SK-N-SH (cell line): ENCODE measurements at regions of chr10 and their contacts with region 1.

Region 1: GRCh38 chr10:102641880-102642735 is 2.2 kb upstream of the TRIM8 start:
- DNase-seq: peak; percentile 92
- H3K4me3 ChIP-seq: peak overlapping the region; percentile 56 to 99
- H3K27ac ChIP-seq: peak overlapping the region; percentile 93 to 94
- H3K4me1 ChIP-seq: peaks cover 4 to 13% of the 10 kb centered on the region in 2 experiments; a peak in 3 of 4 replicates
- H3K27me3 ChIP-seq: no peaks in the 10 kb centered on the region
- CTCF ChIP-seq: no peak
- EP300 ChIP-seq: 0 out of 4 replicates have a peak, but pooled peaks of 1 of the 2 experiments have one; percentile 21
- RAD21 ChIP-seq: no peak

Region 2: GRCh38 chr10:101858723-101859500 is 783.2 kb before region 1 on chr10:
- CTCF ChIA-PET with region 1: no interaction called
- POLR2A ChIA-PET with region 1: no interaction called
- DNase-seq: no peak
- H3K4me3 ChIP-seq: no peak overlapping the region
- H3K27ac ChIP-seq: no peak overlapping the region
- H3K4me1 ChIP-seq: no peaks in the 10 kb centered on the region
- H3K27me3 ChIP-seq: no peaks in the 10 kb centered on the region
- CTCF ChIP-seq: no peak
- EP300 ChIP-seq: no peak
- RAD21 ChIP-seq: no peak

Region 3: DNA sequence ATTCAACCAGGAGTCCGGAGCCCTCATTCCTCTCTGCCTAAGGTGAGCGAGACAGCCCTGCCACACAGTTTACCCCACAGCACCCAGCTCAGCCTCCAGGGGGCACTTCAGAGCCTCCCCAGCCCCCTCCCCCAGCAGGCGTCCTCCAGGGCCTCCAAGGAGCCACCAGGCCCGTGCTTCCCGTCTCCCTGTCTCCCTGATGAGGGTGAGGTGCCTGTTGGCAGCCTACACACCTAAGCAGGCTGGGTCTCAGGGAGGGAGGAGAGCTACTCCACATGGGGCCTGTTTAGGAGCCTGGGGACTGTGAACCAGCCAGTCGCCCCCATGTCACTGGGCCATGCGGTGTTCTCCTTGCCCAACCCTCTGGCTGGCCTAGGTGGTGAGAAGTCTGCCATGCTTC is 26.7 kb before region 1 on chr10:
- CTCF ChIA-PET with region 1: interaction called, 13 read pairs
- POLR2A ChIA-PET with region 1: interaction called, 5 read pairs
- DNase-seq: peak; percentile 70
- H3K4me3 ChIP-seq: no peak overlapping the region
- H3K27ac ChIP-seq: peak overlapping the region in 1 of 2 experiments; percentile 36; a peak in 1 of 4 replicates
- H3K4me1 ChIP-seq: peaks cover 0 to 40% of the 10 kb centered on the region in 2 experiments; a peak in 1 of 4 replicates
- H3K27me3 ChIP-seq: no peaks in the 10 kb centered on the region
- CTCF ChIP-seq: peak; percentile 53
- EP300 ChIP-seq: no peak
- RAD21 ChIP-seq: peak; percentile 44

Region 4: DNA sequence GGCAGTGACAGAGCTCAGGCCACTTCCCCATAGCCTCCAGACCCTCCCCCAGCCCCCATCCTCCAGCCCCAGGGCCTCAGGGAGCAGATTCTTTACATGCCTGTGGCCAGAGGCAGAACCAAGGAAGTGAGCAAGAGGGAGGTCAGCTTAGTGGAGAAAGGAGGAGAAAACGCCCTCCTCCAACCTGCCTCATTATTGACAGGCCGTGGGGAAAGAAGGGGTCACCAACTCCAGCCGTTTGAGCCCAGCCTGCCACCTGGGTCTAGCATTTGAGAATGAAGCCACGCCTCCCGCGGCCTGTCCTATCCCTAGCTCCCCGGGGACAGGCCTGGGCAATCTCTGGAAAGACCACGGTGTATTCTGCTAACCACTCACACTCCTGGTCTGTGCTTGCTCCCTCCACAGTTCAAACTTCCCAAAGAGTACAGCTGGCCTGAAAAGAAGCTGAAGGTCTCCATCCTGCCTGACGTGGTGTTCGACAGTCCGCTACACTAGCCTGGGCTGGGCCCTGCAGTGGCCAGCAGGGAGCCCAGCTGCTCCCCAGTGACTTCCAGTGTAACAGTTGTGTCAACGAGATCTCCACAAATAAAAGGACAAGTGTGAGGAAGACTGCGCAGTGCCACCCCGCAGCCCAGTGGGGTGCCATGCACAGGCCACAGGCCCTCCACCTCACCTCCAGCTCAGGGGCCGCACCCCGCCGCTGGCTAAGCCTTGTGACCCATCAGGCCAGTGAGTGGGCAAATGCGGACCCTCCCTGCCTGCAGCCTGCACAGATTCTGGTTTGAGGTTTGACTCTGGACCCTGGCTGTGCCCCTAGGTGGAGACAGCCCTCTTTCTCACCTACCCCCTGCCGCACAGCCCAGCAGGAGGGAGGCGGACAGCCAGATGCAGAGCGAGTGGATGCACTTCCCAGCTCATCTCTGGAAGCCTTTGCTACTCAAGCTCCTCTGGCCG is 12.2 kb before region 1 on chr10:
- CTCF ChIA-PET with region 1: interaction called, 18 read pairs
- POLR2A ChIA-PET with region 1: interaction called, 34 read pairs
- DNase-seq: no peak
- H3K4me3 ChIP-seq: no peak overlapping the region
- H3K27ac ChIP-seq: peak overlapping the region; percentile 91 to 99
- H3K4me1 ChIP-seq: peaks cover 76 to 82% of the 10 kb centered on the region in 2 experiments
- H3K27me3 ChIP-seq: no peaks in the 10 kb centered on the region
- CTCF ChIP-seq: no peak
- EP300 ChIP-seq: peak in 1 of 2 experiments; percentile 84; a peak in 1 of 4 replicates
- RAD21 ChIP-seq: no peak

Region 5: DNA sequence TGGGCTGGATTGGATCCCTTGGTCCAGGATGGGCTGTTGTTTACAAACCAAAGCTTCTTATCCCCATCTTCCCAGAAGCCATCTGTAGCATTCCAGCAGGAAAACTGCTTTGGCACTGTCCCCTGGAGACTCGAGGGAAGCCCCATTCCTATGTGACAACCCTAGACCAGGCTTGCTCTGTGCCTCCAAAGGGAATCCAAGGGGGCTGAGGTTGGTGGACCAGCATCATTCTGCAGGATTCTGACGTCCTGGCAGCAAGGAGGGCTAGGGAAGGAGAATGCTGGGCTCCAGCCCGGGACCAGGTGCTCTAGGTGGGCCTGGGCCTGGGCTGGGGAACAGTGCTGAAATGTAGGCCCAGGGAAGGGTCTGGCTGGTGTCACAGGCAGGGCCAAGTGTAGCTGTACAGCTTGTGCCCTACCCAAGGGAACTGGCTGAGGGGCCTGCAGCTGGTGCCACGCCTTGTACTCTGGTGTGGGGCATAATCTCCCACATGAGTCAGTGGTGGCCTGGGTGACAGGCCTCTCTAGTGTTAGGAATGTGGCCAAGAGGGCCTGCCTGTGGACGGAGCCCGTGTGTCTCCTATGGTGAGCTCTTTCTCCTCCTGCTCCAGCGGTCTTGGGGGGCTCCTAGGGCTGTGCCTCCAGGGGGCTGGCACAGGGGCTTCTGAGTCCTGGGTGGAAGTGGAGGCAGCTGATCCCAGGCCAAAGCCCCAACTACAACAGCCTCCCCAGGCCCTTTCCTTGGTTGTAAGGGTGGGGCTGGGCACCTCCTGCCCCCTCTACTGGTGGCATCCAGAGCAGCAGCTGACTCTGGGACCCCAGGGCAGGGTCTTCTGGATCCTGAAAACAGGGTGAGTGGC is 27.3 kb after region 1 on chr10:
- CTCF ChIA-PET with region 1: interaction called, 56 read pairs
- POLR2A ChIA-PET with region 1: interaction called, 25 read pairs
- DNase-seq: peak; percentile 76
- H3K4me3 ChIP-seq: no peak overlapping the region
- H3K27ac ChIP-seq: peak overlapping the region in 1 of 2 experiments; percentile 13; a peak in 1 of 4 replicates
- H3K4me1 ChIP-seq: peaks cover 17 to 40% of the 10 kb centered on the region in 2 experiments; a peak in 3 of 4 replicates
- H3K27me3 ChIP-seq: no peaks in the 10 kb centered on the region
- CTCF ChIP-seq: peak; percentile 65
- EP300 ChIP-seq: no peak
- RAD21 ChIP-seq: peak; percentile 13; the same call in 1 of the 2 replicates

Region 6: GRCh38 chr10:102713814-102714620 is 71.9 kb after region 1 on chr10 and contains the start of gene ARL3:
- CTCF ChIA-PET with region 1: interaction called, 13 read pairs
- POLR2A ChIA-PET with region 1: interaction called, 13 read pairs
- DNase-seq: peak; percentile 98
- H3K4me3 ChIP-seq: peak within 1 kb of the TSS; percentile 87 to 91
- H3K27ac ChIP-seq: peak within 1 kb of the TSS; percentile 80 to 86
- H3K4me1 ChIP-seq: peaks cover 18 to 20% of the 10 kb centered on the region in 2 experiments; a peak in 3 of 4 replicates
- H3K27me3 ChIP-seq: no peaks in the 10 kb centered on the region
- CTCF ChIP-seq: no peak; the same call in none of the 2 replicates
- EP300 ChIP-seq: peak in 1 of 2 experiments; percentile 22; a peak in 1 of 4 replicates
- RAD21 ChIP-seq: no peak; the same call in 1 of the 2 replicates
- polyA plus RNA-seq, gene ARL3: 11.2 and 12.5 TPM in 2 replicates